ENCODE measurements at regions of chr7 and their contacts with region 1.

Region 1: DNA sequence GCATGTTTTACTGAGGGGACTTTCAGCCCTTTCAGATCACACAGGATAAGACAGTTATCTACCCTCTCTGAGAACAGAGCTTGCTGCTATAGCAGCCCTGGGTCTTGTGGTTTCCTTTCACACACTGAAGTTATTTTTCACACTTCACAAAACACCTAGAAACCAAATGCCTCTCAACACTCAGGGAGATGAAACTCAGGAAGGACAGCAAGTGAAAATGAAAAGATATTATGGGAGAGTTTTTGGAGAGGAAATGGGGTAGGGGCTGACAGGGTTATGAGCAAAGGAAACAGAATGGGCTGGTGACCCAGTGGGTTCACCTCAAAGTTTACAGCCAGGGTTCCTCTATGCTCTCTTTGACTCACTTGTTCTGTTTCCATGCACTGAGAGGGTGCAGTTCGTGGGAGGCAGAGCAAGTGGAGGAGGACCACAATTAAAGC is 17.0 kb upstream of the GIMAP2 start:
- DNase-seq: peak; percentile 77
- ATAC-seq: peak; percentile 76
- H3K4me3 Mint-ChIP-seq: peak overlapping the region; percentile 28
- H3K27ac Mint-ChIP-seq: peak overlapping the region; percentile 94
- H3K4me1 Mint-ChIP-seq: peaks cover 89% of the 10 kb centered on the region
- H3K27me3 Mint-ChIP-seq: no peaks in the 10 kb centered on the region

Region 2: DNA sequence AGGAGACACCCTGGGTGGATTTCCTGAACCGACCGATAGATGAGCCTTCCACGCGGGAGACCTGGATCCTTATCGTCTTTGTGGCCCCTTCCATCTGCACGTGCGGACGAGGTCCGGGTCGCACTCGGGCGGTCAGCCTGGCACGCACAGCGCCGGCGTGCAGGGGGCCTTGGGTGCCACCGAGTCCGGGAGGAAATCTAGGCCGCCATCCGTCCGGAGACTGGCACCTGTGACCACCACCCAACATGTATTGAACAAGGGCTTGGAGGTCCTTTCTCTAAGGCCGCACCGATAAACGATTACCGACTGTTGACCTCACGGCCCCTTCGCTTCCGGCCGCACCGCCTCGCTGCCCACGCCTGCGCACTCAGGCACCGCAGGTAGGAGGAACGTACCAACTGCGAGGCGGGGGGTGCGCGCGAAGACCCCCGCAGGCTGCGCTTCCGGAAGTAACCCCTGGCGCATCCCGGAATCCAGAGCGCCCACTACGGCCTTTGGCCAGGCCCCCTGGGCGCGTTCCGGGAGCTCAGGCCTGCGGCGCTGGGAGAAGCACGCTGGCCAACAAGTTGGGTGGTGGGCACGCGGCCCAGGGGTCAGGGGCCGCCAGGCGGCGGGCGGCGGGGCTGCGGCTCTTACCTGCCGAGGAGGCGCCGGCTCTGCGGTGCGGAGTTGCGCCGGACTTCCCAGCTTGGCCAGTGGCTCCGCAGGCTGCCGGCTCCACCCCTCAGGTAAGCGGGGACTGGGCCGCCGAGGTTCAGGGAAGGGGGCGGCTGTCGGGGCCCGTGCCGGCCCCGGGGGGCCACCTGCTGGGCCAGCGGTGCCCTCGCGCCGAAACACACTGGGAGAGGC is 345.4 kb before region 1 on chr7 and contains the starts of genes ACTR3C and LRRC61:
- CTCF ChIA-PET with region 1: no interaction called
- POLR2A ChIA-PET with region 1: no interaction called
- intact Hi-C with region 1: loop called in 1 of 2 experiments (anchors 5 kb)
- DNase-seq: peak; percentile 78
- ATAC-seq: peak; percentile 24
- H3K4me3 Mint-ChIP-seq: peak within 1 kb of the TSS; percentile 91
- H3K27ac Mint-ChIP-seq: peak within 1 kb of the TSS; percentile 99
- H3K4me1 Mint-ChIP-seq: peaks cover 52% of the 10 kb centered on the region
- H3K27me3 Mint-ChIP-seq: no peaks in the 10 kb centered on the region
- total RNA-seq, gene ACTR3C: 3.2 to 4.7 TPM
- total RNA-seq, gene LRRC61: 13.0 to 17.4 TPM

Region 3: DNA sequence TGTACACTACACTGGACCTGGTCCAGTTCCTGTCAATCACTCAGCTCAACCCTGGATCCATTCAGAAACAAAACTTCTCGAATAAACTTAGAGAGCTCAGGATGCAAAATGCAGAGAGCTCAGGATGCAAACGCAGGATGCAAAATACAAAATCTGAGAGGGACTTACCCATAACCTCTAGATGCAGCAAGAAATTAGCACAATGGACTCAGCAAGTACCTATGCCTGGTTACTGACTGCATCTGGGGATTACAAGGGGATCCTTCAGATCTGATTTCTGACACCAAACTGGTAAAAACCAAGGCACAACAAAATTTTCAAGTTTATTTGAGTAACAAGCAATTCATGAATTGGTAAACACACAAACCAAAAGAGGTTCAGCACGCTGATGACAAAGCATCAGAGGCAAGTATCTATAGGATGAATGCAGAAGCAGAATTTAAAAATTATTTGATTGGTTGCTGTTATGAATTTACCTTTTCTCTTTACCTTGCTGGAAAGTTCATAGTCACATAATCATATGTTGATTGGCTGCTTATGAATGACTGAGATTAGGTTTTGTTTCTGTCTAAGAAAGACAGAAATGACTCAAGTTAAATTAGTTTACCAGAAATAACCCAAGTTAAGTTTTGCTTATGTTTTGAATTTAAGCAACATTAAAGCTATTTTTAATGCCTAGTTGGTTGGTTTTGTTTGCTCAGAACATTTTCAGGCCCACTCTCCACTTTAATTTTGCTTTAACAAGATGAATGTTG is 47.7 kb before region 1 on chr7:
- CTCF ChIA-PET with region 1: interaction called, 3 read pairs
- POLR2A ChIA-PET with region 1: no interaction called
- intact Hi-C with region 1: loop called (anchors 2 to 5 kb)
- DNase-seq: no peak
- ATAC-seq: peak; percentile 75
- H3K4me3 Mint-ChIP-seq: no peak overlapping the region
- H3K27ac Mint-ChIP-seq: peak overlapping the region; percentile 79
- H3K4me1 Mint-ChIP-seq: peaks cover 53% of the 10 kb centered on the region
- H3K27me3 Mint-ChIP-seq: no peaks in the 10 kb centered on the region

Region 4: GRCh38 chr7:150648353-150649079 is 20.0 kb before region 1 on chr7:
- CTCF ChIA-PET with region 1: interaction called, 3 read pairs
- POLR2A ChIA-PET with region 1: interaction called, 16 read pairs
- intact Hi-C with region 1: no loop called
- DNase-seq: no peak
- ATAC-seq: peak; percentile 33
- H3K4me3 Mint-ChIP-seq: no peak overlapping the region
- H3K27ac Mint-ChIP-seq: peak overlapping the region; percentile 79
- H3K4me1 Mint-ChIP-seq: peaks cover 41% of the 10 kb centered on the region
- H3K27me3 Mint-ChIP-seq: no peaks in the 10 kb centered on the region

Region 5: DNA sequence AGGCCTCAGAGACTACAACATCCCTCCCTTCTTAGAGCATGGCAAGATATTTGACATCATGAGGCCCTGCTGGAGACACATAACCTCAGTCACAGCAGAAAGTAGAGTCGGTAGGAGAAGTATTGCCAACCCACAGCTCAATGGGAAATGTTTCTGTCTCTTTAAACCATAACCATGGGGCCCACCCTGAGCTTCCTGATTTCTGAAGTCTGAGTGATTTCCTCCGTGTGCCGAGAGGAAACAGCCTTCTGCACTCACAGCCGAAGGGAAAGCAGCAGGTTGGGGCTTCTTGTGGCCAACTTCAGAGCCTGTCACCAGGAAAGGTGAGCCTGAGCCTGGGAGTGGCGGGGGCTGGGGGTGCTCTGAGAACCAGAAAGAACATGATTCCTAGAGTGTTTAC is 47.9 kb after region 1 on chr7 and contains the start of gene GIMAP1:
- CTCF ChIA-PET with region 1: interaction called, 17 read pairs
- POLR2A ChIA-PET with region 1: no interaction called
- intact Hi-C with region 1: loop called (anchors 1 to 5 kb)
- DNase-seq: peak; percentile 72
- ATAC-seq: peak; percentile 75
- H3K4me3 Mint-ChIP-seq: peak within 1 kb of the TSS; percentile 95
- H3K27ac Mint-ChIP-seq: peak within 1 kb of the TSS; percentile 99
- H3K4me1 Mint-ChIP-seq: peaks cover 50% of the 10 kb centered on the region
- H3K27me3 Mint-ChIP-seq: no peaks in the 10 kb centered on the region
- total RNA-seq, gene GIMAP1: 3.5 to 5.5 TPM

Region 6: DNA sequence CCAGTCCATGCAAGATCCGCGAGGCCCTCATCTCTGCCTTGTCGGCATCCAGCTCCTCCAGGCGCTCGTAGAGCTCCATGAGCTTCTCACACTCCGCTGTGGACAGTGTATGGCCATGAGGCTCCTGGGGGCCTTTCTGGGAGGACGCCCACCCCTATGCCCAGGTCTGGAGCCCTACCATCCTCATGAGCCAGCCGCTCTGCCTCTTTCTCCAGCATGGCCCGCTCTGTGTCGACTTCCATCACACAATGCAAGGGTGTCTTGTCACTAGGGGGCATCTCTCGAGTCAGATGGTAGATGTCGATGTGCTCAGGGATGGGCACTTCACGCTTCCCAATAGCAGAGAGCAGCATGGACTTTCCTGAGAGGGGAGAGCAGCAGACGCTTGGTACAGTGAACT is 555.3 kb after region 1 on chr7:
- CTCF ChIA-PET with region 1: no interaction called
- POLR2A ChIA-PET with region 1: no interaction called
- intact Hi-C with region 1: no loop called
- DNase-seq: no peak
- ATAC-seq: no peak
- H3K4me3 Mint-ChIP-seq: no peak overlapping the region
- H3K27ac Mint-ChIP-seq: no peak overlapping the region
- H3K4me1 Mint-ChIP-seq: peaks cover 30% of the 10 kb centered on the region
- H3K27me3 Mint-ChIP-seq: no peaks in the 10 kb centered on the region